ENCODE measurements at regions of chr14 and their contacts with region 1.

Region 1: GRCh38 chr14:70821584-70822529 is 12.5 kb upstream of the MAP3K9 start:
- H3K4me3 ChIP-seq: peak overlapping the region; percentile 80
- H3K27ac ChIP-seq: peak overlapping the region; percentile 46; the same call in 1 of the 2 replicates
- H3K4me1 ChIP-seq: no peaks in the 10 kb centered on the region
- CTCF ChIP-seq: no peak

Region 2: DNA sequence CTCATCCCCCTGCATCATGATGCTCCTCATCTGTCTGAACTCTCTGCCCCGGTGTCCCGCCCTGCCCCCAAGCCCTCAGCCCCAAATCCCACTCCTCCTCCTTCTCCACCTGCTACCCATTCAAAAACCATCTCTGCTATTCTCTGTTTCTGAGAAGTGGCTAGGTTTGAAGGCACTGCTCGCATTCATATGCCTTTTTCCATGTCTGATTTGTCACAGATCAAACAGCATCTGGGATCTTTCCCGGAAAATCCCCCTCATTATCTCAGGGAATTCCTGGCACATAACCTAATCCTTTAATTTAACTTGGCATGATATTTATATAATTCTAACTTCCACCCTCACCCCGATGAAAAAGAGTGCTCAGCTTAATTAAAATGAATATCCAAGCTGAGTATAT is 283.8 kb before region 1 on chr14:
- CTCF ChIA-PET with region 1: no interaction called
- POLR2A ChIA-PET with region 1: no interaction called
- H3K4me3 ChIP-seq: no peak overlapping the region
- H3K27ac ChIP-seq: no peak overlapping the region
- H3K4me1 ChIP-seq: no peaks in the 10 kb centered on the region
- CTCF ChIP-seq: no peak

Region 3: GRCh38 chr14:70602254-70602653 is 219.6 kb before region 1 on chr14:
- CTCF ChIA-PET with region 1: interaction called, 11 read pairs
- POLR2A ChIA-PET with region 1: interaction called, 9 read pairs
- H3K4me3 ChIP-seq: no peak overlapping the region
- H3K27ac ChIP-seq: no peak overlapping the region
- H3K4me1 ChIP-seq: peaks cover 8% of the 10 kb centered on the region
- CTCF ChIP-seq: no peak

Region 4: GRCh38 chr14:70794294-70794693 is 27.6 kb before region 1 on chr14:
- CTCF ChIA-PET with region 1: no interaction called
- POLR2A ChIA-PET with region 1: no interaction called
- H3K4me3 ChIP-seq: no peak overlapping the region
- H3K27ac ChIP-seq: no peak overlapping the region
- H3K4me1 ChIP-seq: peaks cover 4% of the 10 kb centered on the region
- CTCF ChIP-seq: no peak

Region 5: GRCh38 chr14:70809543-70810244 is 12.2 kb before region 1 on chr14:
- CTCF ChIA-PET with region 1: interaction called, 12 read pairs
- POLR2A ChIA-PET with region 1: interaction called, 17 read pairs
- H3K4me3 ChIP-seq: peak overlapping the region; percentile 85
- H3K27ac ChIP-seq: peak overlapping the region; percentile 73
- H3K4me1 ChIP-seq: peaks cover 4% of the 10 kb centered on the region; the same call in 1 of the 2 replicates
- CTCF ChIP-seq: no peak

Region 6: DNA sequence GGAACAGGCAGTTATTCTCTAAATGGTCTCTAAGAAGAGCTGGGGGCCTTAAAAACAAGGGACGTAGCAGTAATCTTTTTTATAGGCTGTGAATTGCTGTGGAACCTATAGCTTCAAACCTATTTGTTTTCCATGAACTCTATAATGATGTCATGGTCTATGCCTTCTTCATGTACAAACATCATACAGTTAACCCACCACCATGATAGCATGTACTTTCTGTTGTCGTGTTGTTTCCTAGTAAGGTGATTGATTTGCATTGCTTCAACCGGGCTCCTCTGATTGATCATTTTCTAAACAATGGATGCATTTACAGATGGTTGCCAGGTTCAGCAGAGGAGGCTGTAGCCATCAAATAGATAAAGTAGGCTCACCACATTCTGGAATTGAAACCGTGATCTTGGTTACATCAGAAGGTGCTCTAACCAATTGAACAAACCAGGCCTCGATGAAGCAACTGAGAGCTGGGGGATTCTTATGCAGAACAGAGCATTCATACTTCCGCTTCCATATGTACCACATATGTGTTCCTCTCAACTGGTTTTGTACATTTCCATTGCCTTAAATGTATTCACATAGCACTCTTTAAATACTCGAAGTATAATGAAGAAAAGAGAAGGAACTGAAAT is 59.8 kb after region 1 on chr14:
- CTCF ChIA-PET with region 1: no interaction called
- POLR2A ChIA-PET with region 1: no interaction called
- H3K4me3 ChIP-seq: no peak overlapping the region
- H3K27ac ChIP-seq: no peak overlapping the region
- H3K4me1 ChIP-seq: no peaks in the 10 kb centered on the region; the same call in 1 of the 2 replicates
- CTCF ChIP-seq: no peak

Region 7: GRCh38 chr14:70952485-70952884 is 130.6 kb after region 1 on chr14:
- CTCF ChIA-PET with region 1: interaction called, 16 read pairs
- POLR2A ChIA-PET with region 1: no interaction called
- H3K4me3 ChIP-seq: no peak overlapping the region
- H3K27ac ChIP-seq: no peak overlapping the region
- H3K4me1 ChIP-seq: no peaks in the 10 kb centered on the region
- CTCF ChIP-seq: no peak

Region 8: GRCh38 chr14:70972107-70972976 is 150.5 kb after region 1 on chr14:
- CTCF ChIA-PET with region 1: interaction called, 16 read pairs
- POLR2A ChIA-PET with region 1: no interaction called
- H3K4me3 ChIP-seq: no peak overlapping the region
- H3K27ac ChIP-seq: 0 out of 2 replicates have a peak overlapping the region, but pooled peaks have one; percentile 28
- H3K4me1 ChIP-seq: peaks cover 3% of the 10 kb centered on the region; the same call in 1 of the 2 replicates
- CTCF ChIP-seq: peak; percentile 27; the same call in 1 of the 2 replicates